WTC11 (cell line): ENCODE measurements at regions of chr9 and their contacts with region 1.

Region 1: GRCh38 chr9:4640027-4640426 is 22.1 kb upstream of the PLPP6 start:
- DNase-seq: peak; percentile 50
- ATAC-seq: peak; percentile 60
- H3K4me3 Mint-ChIP-seq: no peak overlapping the region
- H3K27ac Mint-ChIP-seq: no peak overlapping the region
- H3K4me1 Mint-ChIP-seq: peaks cover 13% of the 10 kb centered on the region
- H3K27me3 Mint-ChIP-seq: no peaks in the 10 kb centered on the region
- CTCF ChIP-seq: peak; percentile 18; the same call in 1 of the 2 replicates

Region 2: GRCh38 chr9:4382722-4383317 is 257.2 kb before region 1 on chr9:
- CTCF ChIA-PET with region 1: interaction called, 11 read pairs
- POLR2A ChIA-PET with region 1: no interaction called
- DNase-seq: no peak
- ATAC-seq: peak; percentile 60
- H3K4me3 Mint-ChIP-seq: no peak overlapping the region
- H3K27ac Mint-ChIP-seq: no peak overlapping the region
- H3K4me1 Mint-ChIP-seq: no peaks in the 10 kb centered on the region
- H3K27me3 Mint-ChIP-seq: no peaks in the 10 kb centered on the region
- CTCF ChIP-seq: no peak; the same call in 1 of the 2 replicates

Region 3: DNA sequence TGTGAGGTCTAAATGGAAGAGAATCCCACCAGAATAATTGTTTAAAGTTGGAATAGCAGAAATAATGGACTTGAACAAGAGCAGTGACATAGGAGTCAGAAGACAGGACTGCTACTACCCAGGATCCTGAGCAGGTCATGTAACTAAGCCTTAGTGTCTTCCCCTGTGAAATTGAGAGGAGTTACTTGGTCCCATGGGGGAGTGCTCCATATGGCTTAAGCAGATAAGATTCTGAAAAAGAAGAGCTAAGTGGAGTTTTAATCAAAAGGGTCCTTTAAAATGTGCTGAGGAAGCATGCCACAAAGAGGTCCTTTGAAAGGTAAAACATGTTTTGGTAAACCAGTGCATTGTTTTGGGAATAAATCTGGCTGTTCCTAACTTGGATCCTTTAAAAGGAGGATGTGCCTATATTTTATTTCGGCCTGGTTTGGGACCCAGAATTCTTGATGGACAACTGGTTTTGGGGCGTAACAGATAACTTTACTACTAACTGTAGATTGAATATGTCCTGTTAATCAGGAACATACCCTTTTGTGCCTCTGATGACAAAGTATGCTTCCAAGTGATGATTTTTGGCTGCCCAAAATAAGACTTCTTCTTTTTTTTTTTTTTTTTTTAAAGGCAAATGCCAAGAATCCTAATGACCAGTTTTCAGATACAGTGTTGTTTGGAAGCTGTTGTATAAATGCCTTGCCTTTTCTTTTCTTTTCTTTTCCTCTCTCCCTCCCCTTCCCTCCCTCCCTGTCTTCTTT is 158.4 kb after region 1 on chr9:
- CTCF ChIA-PET with region 1: no interaction called
- POLR2A ChIA-PET with region 1: no interaction called
- DNase-seq: no peak
- ATAC-seq: peak; percentile 15; the same call in 1 of the 2 replicates
- H3K4me3 Mint-ChIP-seq: no peak overlapping the region
- H3K27ac Mint-ChIP-seq: peak overlapping the region; percentile 17
- H3K4me1 Mint-ChIP-seq: peaks cover 47% of the 10 kb centered on the region
- H3K27me3 Mint-ChIP-seq: no peaks in the 10 kb centered on the region
- CTCF ChIP-seq: no peak